IMR-90 (cell line): ENCODE measurements at regions of chr4 and their contacts with region 1.

Region 1: GRCh38 chr4:89528526-89529133 is 221.0 kb upstream of the GPRIN3 start:
- DNase-seq: no peak
- ATAC-seq: no peak
- H3K4me3 ChIP-seq: no peak overlapping the region
- H3K27ac ChIP-seq: no peak overlapping the region
- H3K4me1 ChIP-seq: no peaks in the 10 kb centered on the region
- H3K27me3 ChIP-seq: no peaks in the 10 kb centered on the region; the same call in 1 of the 2 replicates
- CTCF ChIP-seq: no peak
- POLR2A ChIP-seq: no peak
- RAD21 ChIP-seq: no peak

Region 2: GRCh38 chr4:88880501-88881226 is 648.0 kb before region 1 on chr4:
- CTCF ChIA-PET with region 1: no interaction called
- POLR2A ChIA-PET with region 1: no interaction called
- dilution Hi-C with region 1: no loop called
- in situ Hi-C with region 1: no loop called
- intact Hi-C with region 1: no loop called
- DNase-seq: no peak
- ATAC-seq: no peak
- H3K4me3 ChIP-seq: no peak overlapping the region
- H3K27ac ChIP-seq: no peak overlapping the region
- H3K4me1 ChIP-seq: no peaks in the 10 kb centered on the region
- H3K27me3 ChIP-seq: no peaks in the 10 kb centered on the region
- CTCF ChIP-seq: no peak
- POLR2A ChIP-seq: no peak
- RAD21 ChIP-seq: no peak

Region 3: DNA sequence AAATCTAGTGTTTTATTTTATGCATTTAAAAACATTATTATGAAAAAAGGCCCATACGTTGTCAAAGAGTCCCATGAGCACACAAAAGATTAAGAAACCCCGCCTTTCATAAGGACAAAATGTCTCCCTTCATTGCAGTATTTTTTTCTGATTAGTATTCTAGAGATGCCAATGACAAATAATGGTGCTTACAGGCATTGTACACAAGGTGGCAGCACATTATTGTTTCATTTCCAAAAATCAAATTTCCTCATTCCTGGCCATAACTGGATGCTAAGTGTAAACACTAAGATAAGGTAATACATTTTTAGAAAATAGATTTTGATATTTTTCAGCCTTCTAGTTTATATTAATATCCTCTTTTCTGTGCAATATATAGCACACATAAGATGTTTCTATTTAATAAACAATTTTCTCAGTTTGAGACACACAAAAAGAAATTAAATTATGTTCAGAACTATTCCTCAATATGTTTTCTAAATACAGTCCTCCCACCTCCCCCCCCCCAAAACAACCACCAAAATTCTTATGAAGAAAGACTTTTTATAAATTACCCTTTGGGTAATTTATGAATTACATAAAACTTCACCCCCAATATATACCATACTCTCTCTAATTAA is 369.6 kb before region 1 on chr4:
- CTCF ChIA-PET with region 1: no interaction called
- POLR2A ChIA-PET with region 1: interaction called, 15 read pairs
- dilution Hi-C with region 1: no loop called
- in situ Hi-C with region 1: no loop called
- intact Hi-C with region 1: no loop called
- DNase-seq: peak; percentile 43
- ATAC-seq: peak; percentile 88
- H3K4me3 ChIP-seq: no peak overlapping the region
- H3K27ac ChIP-seq: no peak overlapping the region
- H3K4me1 ChIP-seq: no peaks in the 10 kb centered on the region
- H3K27me3 ChIP-seq: peaks cover 7% of the 10 kb centered on the region
- CTCF ChIP-seq: peak; percentile 68
- POLR2A ChIP-seq: no peak
- RAD21 ChIP-seq: peak; percentile 58

Region 4: DNA sequence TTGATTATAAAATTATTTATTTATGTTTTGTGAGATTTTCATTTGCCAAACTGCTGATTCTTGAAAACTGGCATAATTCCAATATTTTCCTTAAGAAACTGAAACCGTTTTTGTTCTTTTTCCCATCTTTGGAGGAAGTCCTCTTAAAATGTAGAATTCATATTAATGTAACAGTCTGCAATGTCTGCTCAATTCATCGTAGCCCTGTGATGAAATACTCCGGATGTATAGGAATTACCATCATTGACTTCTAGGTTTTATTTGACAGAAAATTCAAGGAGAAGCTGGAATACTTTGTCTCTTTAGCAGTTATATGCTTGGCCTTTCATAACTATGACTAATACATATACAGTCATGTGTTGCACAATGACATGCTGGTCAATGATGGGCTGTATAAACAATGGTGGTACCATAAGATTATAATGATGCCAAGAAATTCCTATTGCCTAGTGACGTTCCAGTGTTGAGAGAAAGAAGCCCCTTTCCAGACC is 36.0 kb before region 1 on chr4:
- CTCF ChIA-PET with region 1: no interaction called
- POLR2A ChIA-PET with region 1: no interaction called
- dilution Hi-C with region 1: no loop called
- in situ Hi-C with region 1: no loop called
- intact Hi-C with region 1: no loop called
- DNase-seq: peak; percentile 92
- ATAC-seq: peak; percentile 84
- H3K4me3 ChIP-seq: no peak overlapping the region
- H3K27ac ChIP-seq: no peak overlapping the region
- H3K4me1 ChIP-seq: peaks cover 10% of the 10 kb centered on the region
- H3K27me3 ChIP-seq: no peaks in the 10 kb centered on the region
- CTCF ChIP-seq: no peak
- POLR2A ChIP-seq: no peak
- RAD21 ChIP-seq: no peak